Lower leg skin (tissue), 4 donors: ENCODE measurements at regions of chr5 and their contacts with region 1.

Region 1: GRCh38 chr5:135551593-135552447 is 16.1 kb upstream of the NEUROG1 start:
- DNase-seq: peak in 1 of 2 donors; percentile 79
- H3K4me3 ChIP-seq: no peak overlapping the region
- CTCF ChIP-seq: peak in 1 of 3 donors; percentile 48
- POLR2A ChIP-seq: no peak

Region 2: DNA sequence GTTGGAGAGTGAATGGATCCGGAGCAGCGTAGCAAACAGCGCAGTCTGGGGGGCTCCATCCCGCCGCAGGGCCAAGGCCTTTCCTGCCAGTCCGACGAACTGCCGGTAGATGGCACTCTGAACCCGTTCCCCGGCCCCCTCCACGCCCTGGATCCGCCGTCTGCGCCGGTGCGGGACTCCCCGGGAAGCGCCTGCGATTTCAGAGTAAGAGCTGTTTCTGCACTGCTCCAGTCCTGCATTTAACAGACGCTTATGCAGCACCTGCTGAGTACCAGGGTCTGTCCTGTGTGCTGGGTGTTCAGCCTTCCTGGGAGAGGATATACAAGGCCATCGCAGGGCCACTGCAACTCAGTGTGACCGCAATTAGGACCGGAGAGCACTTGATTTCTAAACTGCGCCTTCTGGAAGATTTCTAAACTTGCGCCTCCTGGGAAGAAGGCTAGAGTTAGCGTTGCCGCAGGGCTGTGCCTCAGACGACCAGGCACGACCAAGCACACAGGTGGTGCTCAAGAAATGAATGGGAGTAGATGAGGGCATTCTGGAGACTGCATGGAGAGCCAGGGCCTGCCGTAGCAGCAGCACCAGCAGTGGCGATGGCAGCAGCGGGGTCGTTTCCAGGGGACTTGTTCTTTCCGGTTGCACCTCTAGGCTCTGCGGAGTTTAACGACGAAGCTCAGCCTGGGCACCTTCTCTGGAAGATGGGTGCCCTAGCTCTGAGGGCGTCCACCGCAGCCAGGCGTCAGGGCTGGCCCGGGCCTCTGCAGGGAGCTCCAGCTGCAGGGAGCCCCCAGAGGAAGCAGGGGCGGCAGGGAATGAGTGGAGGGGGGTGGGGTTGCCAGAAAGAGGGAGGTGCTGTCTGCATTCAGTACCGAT is 85.4 kb before region 1 on chr5:
- intact Hi-C with region 1: loop called (anchors 2 kb)
- DNase-seq: peak; percentile 49 to 95
- H3K4me3 ChIP-seq: no peak overlapping the region
- CTCF ChIP-seq: no peak
- POLR2A ChIP-seq: no peak

Region 3: GRCh38 chr5:136212252-136212721 is 660.5 kb after region 1 on chr5:
- intact Hi-C with region 1: no loop called
- DNase-seq: peak in 1 of 2 donors; percentile 90
- H3K4me3 ChIP-seq: no peak overlapping the region
- CTCF ChIP-seq: peak in 2 of 3 donors; percentile 16 to 70
- POLR2A ChIP-seq: no peak